MCF 10A (cell line): ENCODE measurements at regions of chr3 and their contacts with region 1.

Region 1: GRCh38 chr3:44761424-44762169 is at the starts of genes KIAA1143 and KIF15:
- DNase-seq: peak; percentile 96
- H3K4me3 Mint-ChIP-seq: peak within 1 kb of the TSS; percentile 77
- H3K27ac Mint-ChIP-seq: peak within 1 kb of the TSS; percentile 88
- H3K4me1 Mint-ChIP-seq: peaks cover 11% of the 10 kb centered on the region
- H3K27me3 Mint-ChIP-seq: no peaks in the 10 kb centered on the region
- CTCF ChIP-seq: no peak
- total RNA-seq, gene KIAA1143: 17.7 and 18.2 TPM in 2 replicates
- total RNA-seq, gene KIF15: 5.6 and 10.6 TPM in 2 replicates

Region 2: DNA sequence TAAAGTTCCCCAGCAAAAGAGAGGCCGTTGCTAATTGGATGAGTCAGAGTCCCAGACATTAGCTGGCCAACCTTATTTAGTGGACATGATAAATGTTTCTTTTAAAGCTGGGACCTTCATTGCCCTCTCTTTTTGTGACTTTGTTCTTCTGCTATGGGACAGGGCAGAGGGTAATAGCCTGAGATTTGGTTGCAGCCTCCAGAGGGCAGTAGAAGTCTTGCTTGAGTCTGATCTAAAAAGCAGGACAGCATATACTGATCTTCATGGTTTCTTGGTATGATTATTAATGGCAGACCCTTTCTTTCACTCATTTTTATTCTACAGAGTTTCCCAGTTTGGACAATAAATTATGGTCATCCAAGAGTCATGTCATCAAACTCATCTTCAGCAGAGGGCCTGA is 231.7 kb before region 1 on chr3:
- CTCF ChIA-PET with region 1: interaction called, 3 read pairs
- POLR2A ChIA-PET with region 1: no interaction called
- intact Hi-C with region 1: loop called (anchors 5 kb)
- DNase-seq: peak; percentile 3
- H3K4me3 Mint-ChIP-seq: no peak overlapping the region
- H3K27ac Mint-ChIP-seq: no peak overlapping the region
- H3K4me1 Mint-ChIP-seq: no peaks in the 10 kb centered on the region
- H3K27me3 Mint-ChIP-seq: peaks cover 37% of the 10 kb centered on the region
- CTCF ChIP-seq: no peak

Region 3: GRCh38 chr3:44772099-44772442 is 10.5 kb after region 1 on chr3:
- CTCF ChIA-PET with region 1: interaction called, 4 read pairs
- POLR2A ChIA-PET with region 1: interaction called, 21 read pairs
- intact Hi-C with region 1: no loop called
- DNase-seq: no peak
- H3K4me3 Mint-ChIP-seq: no peak overlapping the region
- H3K27ac Mint-ChIP-seq: no peak overlapping the region
- H3K4me1 Mint-ChIP-seq: no peaks in the 10 kb centered on the region
- H3K27me3 Mint-ChIP-seq: no peaks in the 10 kb centered on the region
- CTCF ChIP-seq: no peak

Region 4: DNA sequence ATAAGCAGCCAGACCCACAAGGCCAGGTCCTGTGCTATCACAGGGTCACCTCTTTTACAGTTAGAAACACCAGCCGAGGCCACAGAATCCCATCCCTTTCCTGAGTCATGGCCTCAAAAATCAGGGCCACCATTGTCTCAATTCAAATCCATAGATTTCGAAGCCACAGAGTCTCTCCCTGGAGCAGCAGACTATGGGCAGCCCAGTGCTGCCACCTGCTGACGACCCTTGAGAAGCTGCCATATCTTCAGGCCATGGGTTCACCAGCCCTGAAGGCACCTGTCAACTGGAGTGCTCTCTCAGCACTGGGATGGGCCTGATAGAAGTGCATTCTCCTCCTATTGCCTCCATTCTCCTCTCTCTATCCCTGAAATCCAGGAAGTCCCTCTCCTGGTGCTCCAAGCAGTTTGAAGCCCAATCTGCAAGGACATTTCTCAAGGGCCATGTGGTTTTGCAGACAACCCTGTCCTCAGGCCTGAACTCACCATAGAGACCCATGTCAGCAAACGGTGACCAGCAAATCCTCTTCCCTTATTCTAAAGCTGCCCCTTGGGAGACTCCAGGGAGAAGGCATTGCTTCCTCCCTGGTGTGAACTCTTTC is 152.4 kb after region 1 on chr3:
- CTCF ChIA-PET with region 1: interaction called, 8 read pairs
- POLR2A ChIA-PET with region 1: interaction called, 6 read pairs
- intact Hi-C with region 1: loop called (anchors 1 kb)
- DNase-seq: peak; percentile 84
- H3K4me3 Mint-ChIP-seq: no peak overlapping the region
- H3K27ac Mint-ChIP-seq: no peak overlapping the region
- H3K4me1 Mint-ChIP-seq: peaks cover 14% of the 10 kb centered on the region
- H3K27me3 Mint-ChIP-seq: no peaks in the 10 kb centered on the region
- CTCF ChIP-seq: peak; percentile 79

Region 5: DNA sequence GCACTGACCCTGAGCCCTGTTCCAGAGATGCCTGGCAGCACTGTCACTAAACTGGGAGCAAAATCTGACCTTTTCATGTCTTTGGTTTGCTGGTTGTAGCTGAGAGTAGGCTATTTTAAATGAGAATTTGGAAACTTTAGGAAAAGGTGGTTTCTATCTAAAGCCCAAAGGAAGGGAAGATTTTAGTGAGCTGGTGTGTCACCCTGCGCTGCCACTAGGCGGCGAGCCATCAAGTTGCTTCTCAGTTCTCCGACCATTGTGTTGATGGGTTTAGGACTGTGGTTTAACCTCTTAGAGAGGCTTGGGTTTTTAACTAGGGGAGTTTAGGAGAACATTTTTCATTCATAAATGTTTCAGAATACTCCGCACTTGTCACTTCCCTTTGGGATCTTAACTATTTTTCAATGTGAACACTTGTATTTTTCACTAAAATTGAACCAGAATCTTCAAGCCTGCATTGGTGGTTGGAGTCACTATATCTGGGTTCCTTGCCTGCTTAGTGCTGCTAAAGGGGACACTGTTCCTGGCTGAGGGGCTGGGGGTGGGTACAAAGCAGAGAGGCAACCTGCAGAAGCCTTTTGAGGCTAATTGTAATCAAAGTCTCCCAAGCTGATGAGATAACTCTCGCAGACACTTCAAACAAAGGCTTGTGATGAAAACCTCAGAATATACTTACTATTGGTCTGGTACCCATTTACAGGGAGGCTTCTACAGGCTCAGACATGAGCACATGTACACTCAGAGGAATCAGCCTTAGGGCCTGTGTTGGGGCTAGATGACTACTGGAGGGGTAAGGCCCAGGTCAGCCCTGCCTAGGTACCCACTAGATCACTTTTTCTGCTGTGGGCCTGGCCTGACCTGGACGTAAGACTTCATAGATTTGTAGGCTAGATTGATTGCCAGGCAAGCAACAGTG is 231.2 kb after region 1 on chr3:
- CTCF ChIA-PET with region 1: no interaction called
- POLR2A ChIA-PET with region 1: interaction called, 7 read pairs
- intact Hi-C with region 1: loop called (anchors 5 kb)
- DNase-seq: peak; percentile 37
- H3K4me3 Mint-ChIP-seq: no peak overlapping the region
- H3K27ac Mint-ChIP-seq: peak overlapping the region; percentile 76
- H3K4me1 Mint-ChIP-seq: peaks cover 44% of the 10 kb centered on the region
- H3K27me3 Mint-ChIP-seq: no peaks in the 10 kb centered on the region
- CTCF ChIP-seq: peak; percentile 35